Ascending aorta (tissue), 2 donors: ENCODE measurements at regions of chr4 and their contacts with region 1.

Region 1: GRCh38 chr4:168710353-168710946 is 213.6 kb downstream of the PALLD start:
- DNase-seq: peak in 1 of 2 donors; percentile 81
- H3K4me3 ChIP-seq: no peak overlapping the region
- H3K27ac ChIP-seq: peak overlapping the region; percentile 81 to 87
- H3K4me1 ChIP-seq: peaks cover 8 to 21% of the 10 kb centered on the region in 2 donors
- H3K27me3 ChIP-seq: no peaks in the 10 kb centered on the region
- CTCF ChIP-seq: peak; percentile 13 to 76 (median 70)

Region 2: GRCh38 chr4:167722487-167722808 is 988.0 kb before region 1 on chr4:
- intact Hi-C with region 1: no loop called
- DNase-seq: no peak
- H3K4me3 ChIP-seq: no peak overlapping the region
- H3K27ac ChIP-seq: no peak overlapping the region
- H3K4me1 ChIP-seq: no peaks in the 10 kb centered on the region
- H3K27me3 ChIP-seq: no peaks in the 10 kb centered on the region
- CTCF ChIP-seq: no peak

Region 3: GRCh38 chr4:168631241-168632162 is 78.9 kb before region 1 on chr4:
- intact Hi-C with region 1: loop called (anchors 2 kb)
- DNase-seq: peak in 1 of 2 donors; percentile 73
- H3K4me3 ChIP-seq: peak overlapping the region; percentile 69 to 72
- H3K27ac ChIP-seq: peak overlapping the region; percentile 70 to 81
- H3K4me1 ChIP-seq: peaks cover 4 to 25% of the 10 kb centered on the region in 2 donors
- H3K27me3 ChIP-seq: no peaks in the 10 kb centered on the region
- CTCF ChIP-seq: peak; percentile 40 to 50 (median 47)

Region 4: DNA sequence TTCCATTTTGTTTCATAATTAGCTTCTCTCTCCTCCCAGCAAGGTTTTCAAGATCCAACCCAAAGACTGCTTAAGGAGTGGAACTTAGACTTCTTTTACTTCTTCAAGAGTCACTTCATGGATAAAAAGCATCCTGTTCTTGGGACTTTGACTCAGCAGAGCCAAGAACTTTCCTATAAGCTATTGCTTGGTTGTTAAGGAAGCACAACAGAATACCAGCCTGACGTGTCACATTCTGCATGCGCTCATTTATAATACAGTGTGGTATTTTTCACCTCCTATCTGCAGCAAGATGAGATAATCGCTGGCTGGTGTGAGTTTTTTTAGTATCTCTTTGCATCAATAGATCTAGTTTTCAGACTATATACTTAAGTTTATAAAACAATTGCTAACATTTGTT is 61.5 kb before region 1 on chr4:
- intact Hi-C with region 1: no loop called
- DNase-seq: no peak
- H3K4me3 ChIP-seq: no peak overlapping the region
- H3K27ac ChIP-seq: no peak overlapping the region
- H3K4me1 ChIP-seq: peaks cover 0 to 5% of the 10 kb centered on the region in 2 donors
- H3K27me3 ChIP-seq: no peaks in the 10 kb centered on the region
- CTCF ChIP-seq: no peak

Region 5: DNA sequence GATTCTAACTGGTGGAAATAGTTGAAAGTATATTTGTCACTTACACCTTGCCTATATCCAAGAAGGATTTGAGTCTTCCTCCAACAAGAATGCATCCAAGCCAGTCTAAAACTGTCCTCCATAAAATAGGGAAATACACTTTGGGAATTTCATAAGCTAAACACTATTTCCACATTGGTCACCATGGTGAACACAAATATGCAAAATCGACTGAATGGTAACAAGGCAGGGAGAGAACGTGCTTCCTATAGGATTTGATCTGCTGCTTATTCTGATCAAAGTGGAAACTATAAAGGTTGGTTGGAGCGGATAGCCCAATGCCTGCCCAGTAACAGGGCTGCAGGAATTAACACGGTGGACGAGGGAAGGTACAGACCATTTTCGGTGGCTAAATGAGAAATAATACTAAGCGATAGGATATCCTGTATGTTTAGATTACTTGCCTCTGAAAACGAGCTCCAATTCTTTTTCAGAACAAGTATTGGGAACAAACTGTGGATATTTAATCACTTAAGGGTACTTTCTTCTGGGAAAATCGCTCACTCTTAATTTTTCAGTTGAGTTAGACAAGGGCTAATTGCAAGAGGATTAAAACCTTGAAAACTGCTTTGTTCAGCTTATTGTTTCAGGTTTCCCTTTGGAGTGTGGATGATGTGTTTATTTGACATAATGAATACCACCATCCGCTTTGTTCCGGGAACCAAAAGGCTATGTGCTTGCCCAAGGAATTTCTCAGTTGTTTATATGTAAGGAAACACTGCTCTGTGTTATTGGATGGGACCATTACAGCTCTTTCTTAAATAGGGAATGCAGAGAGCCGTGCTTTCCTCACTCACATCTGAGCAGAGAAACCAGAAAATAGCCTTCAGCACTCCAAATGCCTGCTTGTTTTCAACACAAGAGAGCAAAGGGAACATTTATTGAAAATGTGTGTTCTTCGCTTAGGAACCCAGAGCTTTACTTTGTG is 105.2 kb after region 1 on chr4:
- intact Hi-C with region 1: loop called (anchors 2 kb)
- DNase-seq: no peak
- H3K4me3 ChIP-seq: peak overlapping the region in 1 of 2 donors; percentile 43
- H3K27ac ChIP-seq: peak overlapping the region; percentile 78 to 84
- H3K4me1 ChIP-seq: peaks cover 5 to 33% of the 10 kb centered on the region in 2 donors
- H3K27me3 ChIP-seq: no peaks in the 10 kb centered on the region
- CTCF ChIP-seq: no peak

Region 6: GRCh38 chr4:168841000-168841671 is 130.7 kb after region 1 on chr4:
- intact Hi-C with region 1: no loop called
- DNase-seq: no peak
- H3K4me3 ChIP-seq: peak overlapping the region in 1 of 2 donors; percentile 90
- H3K27ac ChIP-seq: peak overlapping the region; percentile 97 to 99
- H3K4me1 ChIP-seq: peaks cover 39 to 80% of the 10 kb centered on the region in 2 donors
- H3K27me3 ChIP-seq: no peaks in the 10 kb centered on the region
- CTCF ChIP-seq: no peak

Region 7: GRCh38 chr4:168917138-168917779 is 206.8 kb after region 1 on chr4:
- intact Hi-C with region 1: loop called (anchors 2 kb)
- DNase-seq: no peak
- H3K4me3 ChIP-seq: no peak overlapping the region
- H3K27ac ChIP-seq: peak overlapping the region; percentile 28 to 36
- H3K4me1 ChIP-seq: no peaks in the 10 kb centered on the region
- H3K27me3 ChIP-seq: no peaks in the 10 kb centered on the region
- CTCF ChIP-seq: peak in 2 of 3 experiments; percentile 46 to 57

Region 8: GRCh38 chr4:169033660-169034059 is 323.2 kb after region 1 on chr4:
- intact Hi-C with region 1: no loop called
- DNase-seq: no peak
- H3K4me3 ChIP-seq: no peak overlapping the region
- H3K27ac ChIP-seq: no peak overlapping the region
- H3K4me1 ChIP-seq: no peaks in the 10 kb centered on the region
- H3K27me3 ChIP-seq: no peaks in the 10 kb centered on the region
- CTCF ChIP-seq: no peak